ENCODE measurements at regions of chr15 and their contacts with region 1.

Region 1: DNA sequence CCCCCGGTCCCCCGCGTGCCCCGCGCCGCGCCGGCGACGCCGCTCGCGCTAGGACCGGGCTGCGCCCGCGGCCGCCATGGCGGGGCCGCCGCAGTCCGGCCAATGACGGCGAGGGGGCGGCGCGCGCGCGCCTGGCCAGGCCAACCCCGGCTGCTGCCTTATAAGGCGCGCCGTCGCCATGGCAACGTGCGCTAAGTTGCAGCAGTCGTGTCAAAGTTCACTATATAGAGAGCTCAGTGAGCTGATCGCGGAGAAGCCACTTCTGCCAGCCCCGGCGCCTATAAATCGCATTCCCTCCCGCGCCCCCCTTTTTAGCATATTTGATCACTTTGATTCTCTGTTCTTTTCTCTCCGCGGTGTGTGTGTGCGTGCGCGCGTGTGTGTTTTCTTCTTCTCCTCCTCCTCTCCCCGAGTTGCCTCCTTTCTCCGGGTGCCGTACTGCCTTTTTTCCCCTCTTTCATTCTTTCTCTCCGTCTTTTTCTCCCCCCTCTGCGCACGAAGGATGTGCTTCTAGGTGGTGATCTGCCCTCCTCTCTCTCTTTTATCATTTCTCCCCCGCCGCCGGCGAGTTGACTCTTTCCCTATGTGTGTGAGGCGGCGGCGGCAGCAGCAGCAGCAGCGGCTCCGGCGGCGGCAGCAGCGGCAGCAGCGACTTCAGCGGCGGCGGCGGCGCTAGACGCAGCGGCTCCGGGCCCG is at the start of gene NR2F2:
- DNase-seq: peak; percentile 98
- H3K4me3 ChIP-seq: peak within 1 kb of the TSS; percentile 92 to 99 (median 99)
- H3K27ac ChIP-seq: peak within 1 kb of the TSS; percentile 92
- H3K4me1 ChIP-seq: peaks cover 22% of the 10 kb centered on the region
- H3K27me3 ChIP-seq: no peaks in the 10 kb centered on the region
- CTCF ChIP-seq: no peak
- POLR2A ChIP-seq: peak; percentile 99
- total RNA-seq, gene NR2F2: 153 and 182 TPM in 2 replicates

Region 2: DNA sequence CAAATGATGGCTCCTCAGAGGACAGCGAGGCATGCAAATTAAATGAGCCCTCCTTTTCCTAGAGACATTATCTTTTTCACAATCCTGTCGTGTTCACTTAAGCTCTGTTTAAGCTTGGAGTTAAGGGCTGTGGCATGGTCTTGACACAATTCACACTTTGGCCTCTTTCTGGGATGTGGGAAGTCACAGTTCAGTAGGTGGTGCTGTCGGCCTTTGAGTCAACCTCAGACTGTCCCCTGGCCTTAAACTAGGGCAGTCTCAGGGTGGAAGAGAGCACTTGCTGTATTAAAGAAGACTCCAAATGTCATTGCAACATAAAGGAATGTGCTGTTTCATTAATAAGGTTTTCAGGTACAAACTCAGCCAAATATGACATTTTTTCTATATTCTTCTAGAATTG is 1748.2 kb before region 1 on chr15:
- CTCF ChIA-PET with region 1: interaction called, 16 read pairs
- POLR2A ChIA-PET with region 1: no interaction called
- dilution Hi-C with region 1: no loop called
- intact Hi-C with region 1: loop called (anchors 1 kb)
- DNase-seq: peak; percentile 85
- H3K4me3 ChIP-seq: no peak overlapping the region
- H3K27ac ChIP-seq: no peak overlapping the region
- H3K4me1 ChIP-seq: peaks cover 25% of the 10 kb centered on the region
- H3K27me3 ChIP-seq: no peaks in the 10 kb centered on the region
- CTCF ChIP-seq: peak; percentile 75 to 80
- POLR2A ChIP-seq: no peak

Region 3: DNA sequence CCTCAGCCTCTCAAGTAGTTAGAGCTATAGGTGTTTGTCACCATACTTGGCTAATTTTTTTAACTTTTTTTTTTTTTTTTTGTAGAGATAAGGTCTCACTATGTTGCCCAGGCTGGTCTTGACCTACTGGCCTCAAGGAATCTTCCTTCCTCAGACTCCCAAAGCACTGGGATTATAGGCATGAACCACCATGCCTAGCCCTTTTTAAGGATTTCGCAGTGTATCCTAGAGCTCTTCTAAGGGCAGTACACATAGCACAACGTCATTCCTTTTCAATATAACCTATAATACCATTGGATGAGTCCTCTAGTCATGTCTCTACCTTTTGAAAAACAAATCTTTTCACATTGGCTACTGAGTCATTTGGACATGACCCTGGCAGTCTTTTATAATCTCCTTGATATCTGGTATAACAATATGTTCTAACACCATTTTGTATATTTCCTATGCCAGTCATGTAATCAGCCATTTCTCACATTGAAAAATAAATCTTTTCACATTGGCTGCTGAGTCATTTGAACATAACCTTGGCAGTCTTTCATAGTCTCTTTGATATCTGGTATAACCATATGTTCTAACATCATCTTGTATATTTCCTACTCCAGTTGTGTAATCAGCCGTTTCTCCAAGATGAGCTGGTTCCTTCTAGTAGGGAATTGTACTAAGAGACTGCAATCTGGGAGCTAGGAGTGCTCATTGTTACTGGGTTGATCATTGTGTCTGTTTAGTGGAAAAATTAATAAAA is 1154.5 kb before region 1 on chr15:
- CTCF ChIA-PET with region 1: interaction called, 6 read pairs
- POLR2A ChIA-PET with region 1: no interaction called
- dilution Hi-C with region 1: no loop called
- intact Hi-C with region 1: loop called (anchors 2 kb)
- DNase-seq: peak; percentile 94
- H3K4me3 ChIP-seq: no peak overlapping the region
- H3K27ac ChIP-seq: peak overlapping the region; percentile 95
- H3K4me1 ChIP-seq: peaks cover 30% of the 10 kb centered on the region
- H3K27me3 ChIP-seq: no peaks in the 10 kb centered on the region
- CTCF ChIP-seq: no peak
- POLR2A ChIP-seq: no peak

Region 4: DNA sequence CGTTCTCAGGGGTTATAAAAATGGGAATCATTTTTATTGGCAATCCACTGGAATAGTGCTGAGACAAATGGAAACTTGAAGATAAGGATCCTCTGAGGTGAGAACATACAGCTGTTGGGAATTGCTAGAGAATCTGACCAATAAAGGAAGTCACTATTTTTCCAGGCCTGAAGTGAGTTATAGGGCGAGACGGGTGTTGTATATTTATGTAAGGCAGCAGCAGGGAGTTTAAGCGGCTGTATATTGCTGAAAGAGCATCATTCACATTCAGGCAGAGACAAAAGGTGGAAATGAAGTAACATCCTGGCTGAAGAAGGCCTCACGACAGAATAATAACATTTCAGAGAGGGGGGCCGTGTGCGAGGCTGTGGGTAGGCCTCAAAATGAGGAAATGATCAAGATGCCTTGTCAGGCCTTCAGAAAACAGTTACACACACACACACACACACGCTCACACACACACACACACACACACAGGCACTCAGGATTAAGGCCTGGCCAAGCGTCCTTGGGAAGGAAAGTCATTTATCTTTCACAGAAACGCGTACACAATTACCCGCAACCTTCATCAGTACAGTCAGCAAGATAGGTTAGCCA is 965.0 kb before region 1 on chr15:
- CTCF ChIA-PET with region 1: interaction called, 8 read pairs
- POLR2A ChIA-PET with region 1: no interaction called
- dilution Hi-C with region 1: no loop called
- intact Hi-C with region 1: loop called (anchors 1 kb)
- DNase-seq: peak; percentile 100
- H3K4me3 ChIP-seq: no peak overlapping the region
- H3K27ac ChIP-seq: peak overlapping the region; percentile 98
- H3K4me1 ChIP-seq: peaks cover 37% of the 10 kb centered on the region
- H3K27me3 ChIP-seq: no peaks in the 10 kb centered on the region
- CTCF ChIP-seq: no peak
- POLR2A ChIP-seq: peak; percentile 87

Region 5: GRCh38 chr15:95734422-95735316 is 595.9 kb before region 1 on chr15:
- CTCF ChIA-PET with region 1: interaction called, 6 read pairs
- POLR2A ChIA-PET with region 1: interaction called, 3 read pairs
- dilution Hi-C with region 1: no loop called
- intact Hi-C with region 1: loop called (anchors 2 kb)
- DNase-seq: peak; percentile 96
- H3K4me3 ChIP-seq: no peak overlapping the region
- H3K27ac ChIP-seq: peak overlapping the region; percentile 70
- H3K4me1 ChIP-seq: peaks cover 28% of the 10 kb centered on the region
- H3K27me3 ChIP-seq: no peaks in the 10 kb centered on the region
- CTCF ChIP-seq: no peak
- POLR2A ChIP-seq: peak; percentile 50

Region 6: GRCh38 chr15:96160269-96160668 is 170.3 kb before region 1 on chr15:
- CTCF ChIA-PET with region 1: interaction called, 15 read pairs
- POLR2A ChIA-PET with region 1: no interaction called
- dilution Hi-C with region 1: no loop called
- intact Hi-C with region 1: no loop called
- DNase-seq: peak; percentile 95
- H3K4me3 ChIP-seq: peak overlapping the region in 1 of 3 experiments; percentile 26
- H3K27ac ChIP-seq: peak overlapping the region; percentile 28
- H3K4me1 ChIP-seq: peaks cover 33% of the 10 kb centered on the region
- H3K27me3 ChIP-seq: no peaks in the 10 kb centered on the region
- CTCF ChIP-seq: no peak
- POLR2A ChIP-seq: no peak

Region 7: GRCh38 chr15:97234851-97235610 is 904.4 kb after region 1 on chr15:
- CTCF ChIA-PET with region 1: interaction called, 14 read pairs
- POLR2A ChIA-PET with region 1: no interaction called
- dilution Hi-C with region 1: no loop called
- intact Hi-C with region 1: loop called (anchors 1 kb)
- DNase-seq: peak; percentile 71
- H3K4me3 ChIP-seq: no peak overlapping the region
- H3K27ac ChIP-seq: no peak overlapping the region
- H3K4me1 ChIP-seq: no peaks in the 10 kb centered on the region
- H3K27me3 ChIP-seq: peaks cover 0 to 2% of the 10 kb centered on the region in 2 experiments
- CTCF ChIP-seq: peak; percentile 75 to 90
- POLR2A ChIP-seq: no peak